ENCODE measurements at regions of chr1 and their contacts with region 1.

Region 1: GRCh38 chr1:56120021-56120420 is 459.3 kb downstream of the PLPP3 start:
- DNase-seq: peak; percentile 59
- ATAC-seq: peak; percentile 79
- H3K4me3 ChIP-seq: no peak overlapping the region
- H3K27ac ChIP-seq: no peak overlapping the region
- H3K4me1 ChIP-seq: peaks cover 10% of the 10 kb centered on the region
- H3K27me3 ChIP-seq: no peaks in the 10 kb centered on the region
- CTCF ChIP-seq: no peak

Region 2: DNA sequence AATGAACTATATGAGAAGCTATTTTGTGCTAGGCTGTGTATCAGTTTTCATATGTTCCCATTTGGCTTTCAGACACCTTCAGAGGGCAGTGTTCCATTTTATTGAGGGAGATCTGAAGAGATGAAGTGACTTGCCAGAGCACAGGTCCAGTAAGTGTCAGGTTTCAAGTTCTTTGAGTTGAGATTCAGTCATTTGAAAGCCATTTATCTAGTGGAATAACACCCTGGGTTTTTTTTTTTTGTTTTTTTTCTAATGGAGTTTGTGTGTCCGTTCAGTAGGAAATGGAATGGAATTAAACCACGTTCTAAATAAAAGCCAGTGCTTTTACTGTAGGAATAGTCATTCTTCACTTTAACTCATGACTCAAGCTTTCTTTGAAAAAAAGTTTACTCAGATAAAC is 252.0 kb before region 1 on chr1:
- CTCF ChIA-PET with region 1: no interaction called
- POLR2A ChIA-PET with region 1: interaction called, 10 read pairs
- intact Hi-C with region 1: no loop called
- DNase-seq: peak; percentile 48
- ATAC-seq: peak; percentile 45
- H3K4me3 ChIP-seq: no peak overlapping the region
- H3K27ac ChIP-seq: peak overlapping the region; percentile 25
- H3K4me1 ChIP-seq: peaks cover 23% of the 10 kb centered on the region
- H3K27me3 ChIP-seq: no peaks in the 10 kb centered on the region
- CTCF ChIP-seq: peak; percentile 40; the same call in 1 of the 2 replicates

Region 3: GRCh38 chr1:56029319-56030003 is 90.6 kb before region 1 on chr1:
- CTCF ChIA-PET with region 1: no interaction called
- POLR2A ChIA-PET with region 1: no interaction called
- intact Hi-C with region 1: no loop called
- DNase-seq: peak; percentile 12
- ATAC-seq: no peak
- H3K4me3 ChIP-seq: no peak overlapping the region
- H3K27ac ChIP-seq: no peak overlapping the region
- H3K4me1 ChIP-seq: peaks cover 3% of the 10 kb centered on the region; the same call in 1 of the 2 replicates
- H3K27me3 ChIP-seq: no peaks in the 10 kb centered on the region
- CTCF ChIP-seq: peak; percentile 27; the same call in 1 of the 2 replicates

Region 4: GRCh38 chr1:56135069-56135863 is 15.2 kb after region 1 on chr1:
- CTCF ChIA-PET with region 1: no interaction called
- POLR2A ChIA-PET with region 1: no interaction called
- intact Hi-C with region 1: no loop called
- DNase-seq: peak; percentile 33
- ATAC-seq: no peak
- H3K4me3 ChIP-seq: no peak overlapping the region
- H3K27ac ChIP-seq: no peak overlapping the region
- H3K4me1 ChIP-seq: peaks cover 9% of the 10 kb centered on the region; the same call in 1 of the 2 replicates
- H3K27me3 ChIP-seq: no peaks in the 10 kb centered on the region
- CTCF ChIP-seq: no peak